ENCODE measurements at regions of chr5 and their contacts with region 1.

Region 1: DNA sequence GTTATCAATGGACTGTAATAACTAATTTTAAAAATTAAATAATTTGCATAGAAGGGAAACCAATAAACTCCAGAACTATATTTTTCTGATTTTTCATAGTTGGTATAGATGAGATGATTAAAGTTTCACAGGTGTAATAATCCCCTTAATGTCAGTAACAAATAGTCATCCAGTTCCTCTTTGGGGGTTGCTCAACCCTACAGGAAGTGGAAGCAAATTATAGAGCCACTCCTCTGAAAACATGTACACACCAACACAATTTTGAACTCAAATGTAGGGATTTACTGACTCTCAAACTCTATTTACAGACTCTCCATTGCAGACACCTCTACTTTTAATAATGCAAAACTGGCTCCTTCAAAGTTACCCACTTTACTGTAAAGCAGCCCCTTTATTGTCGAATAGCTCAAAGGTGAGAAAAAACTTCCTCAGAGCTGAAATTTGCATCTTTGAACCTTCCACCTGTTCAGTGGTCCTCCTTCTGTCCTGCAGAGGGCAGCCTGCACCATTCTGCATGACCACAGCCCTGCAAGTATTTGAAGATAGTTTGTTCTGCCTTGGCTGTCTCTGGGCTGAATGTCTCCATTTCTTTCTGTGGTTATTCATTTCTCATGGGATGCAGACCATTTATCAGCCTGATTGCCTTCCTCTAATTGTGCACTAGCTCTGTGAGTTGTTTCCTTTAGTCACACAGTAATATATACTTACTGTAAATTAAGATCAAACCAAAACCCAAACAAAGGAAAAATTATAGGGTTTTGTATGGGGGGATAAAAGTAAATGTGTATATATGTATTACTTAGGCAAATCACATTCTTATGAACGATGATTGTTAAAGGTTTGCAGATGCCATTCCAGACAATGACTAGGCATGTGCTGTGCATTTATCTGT is 383.2 kb upstream of the SGCD start:
- DNase-seq: no peak

Region 2: DNA sequence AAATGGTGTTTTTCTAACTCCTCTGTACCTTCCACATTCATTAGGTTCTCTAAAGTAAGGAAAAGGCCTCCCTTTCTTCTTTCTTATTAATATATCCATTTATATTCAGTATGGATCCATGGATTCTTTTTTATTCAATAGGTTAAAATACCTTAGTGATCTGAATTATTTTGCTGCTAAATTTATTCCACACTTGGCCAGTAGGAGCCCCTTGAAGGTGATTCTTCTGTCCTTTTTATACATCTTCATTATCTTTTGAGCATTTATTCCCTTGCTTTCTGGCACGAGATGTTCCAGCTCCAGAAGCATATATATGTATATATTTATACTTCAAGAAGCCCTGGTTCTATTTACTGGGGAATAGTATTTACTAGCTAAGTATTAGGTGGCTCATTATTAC is 71.4 kb after region 1 on chr5:
- intact Hi-C with region 1: loop called in 1 of 2 experiments (anchors 2 kb)
- DNase-seq: no peak

Region 3: GRCh38 chr5:156824800-156825199 is 881.0 kb after region 1 on chr5:
- intact Hi-C with region 1: loop called in 1 of 2 experiments (anchors 5 kb)
- DNase-seq: no peak